ENCODE measurements at regions of chr16 and their contacts with region 1.

Region 1: GRCh38 chr16:2340564-2341455 is at the start of gene ABCA3:
- DNase-seq: peak; percentile 81 to 97 (median 92)
- ATAC-seq: peak; percentile 88
- H3K4me3 ChIP-seq: peak within 1 kb of the TSS; percentile 69
- H3K4me3 Mint-ChIP-seq: peak within 1 kb of the TSS; percentile 90
- H3K27ac ChIP-seq: no peak within 1 kb of the TSS
- H3K27ac Mint-ChIP-seq: peak within 1 kb of the TSS; percentile 55
- H3K4me1 ChIP-seq: peaks cover 20% of the 10 kb centered on the region
- H3K4me1 Mint-ChIP-seq: peaks cover 17% of the 10 kb centered on the region
- H3K27me3 ChIP-seq: peaks cover 0 to 2% of the 10 kb centered on the region in 2 experiments
- H3K27me3 Mint-ChIP-seq: no peaks in the 10 kb centered on the region
- CTCF ChIP-seq: peak; percentile 97
- total RNA-seq, gene ABCA3: 7.0 to 7.7 TPM

Region 2: DNA sequence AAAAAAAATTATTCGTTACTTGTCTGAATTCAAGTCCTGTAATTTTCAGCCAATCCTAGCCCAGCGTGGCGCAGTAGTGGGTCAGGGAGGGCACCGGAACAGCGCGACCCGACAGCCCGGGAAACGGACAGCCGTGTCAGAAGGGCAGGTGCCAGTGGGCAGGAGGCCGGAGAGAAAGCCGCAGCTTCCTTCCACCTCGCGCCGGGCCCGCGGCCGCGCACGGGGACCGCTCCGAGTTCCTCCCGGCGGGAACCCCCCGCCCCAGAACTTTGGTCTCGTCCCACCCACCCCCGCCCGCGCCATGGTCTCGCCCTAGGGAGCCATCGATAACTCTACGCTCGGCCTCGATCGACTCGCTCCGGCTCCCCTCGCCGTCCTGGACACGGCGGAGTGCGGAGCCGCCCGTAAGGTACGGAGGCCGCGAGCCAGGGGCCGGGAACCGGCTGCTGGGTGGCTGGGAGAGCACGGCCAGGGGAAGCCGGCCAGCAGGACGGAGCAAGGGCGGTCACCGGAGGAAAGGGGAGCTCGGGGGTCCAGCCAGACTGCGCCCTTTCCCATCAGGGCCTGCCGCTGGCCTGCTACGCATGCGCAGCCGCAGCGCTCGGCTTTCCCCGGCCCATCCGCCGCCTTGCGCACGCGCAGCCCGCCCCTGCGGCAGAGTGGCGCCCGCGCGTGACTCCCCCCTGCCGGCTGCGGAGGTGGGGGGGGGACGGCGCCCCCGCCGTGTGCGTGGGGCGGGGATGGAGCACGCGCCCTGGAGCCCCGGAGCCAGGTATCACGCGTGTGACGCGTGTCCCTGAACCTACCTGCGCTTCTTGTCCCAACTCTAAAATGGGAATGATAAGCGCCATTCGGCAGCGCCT is 135.5 kb before region 1 on chr16 and contains the start of gene MLST8:
- CTCF ChIA-PET with region 1: no interaction called
- POLR2A ChIA-PET with region 1: no interaction called
- intact Hi-C with region 1: no loop called
- DNase-seq: peak; percentile 82 to 98 (median 92)
- ATAC-seq: peak; percentile 82
- H3K4me3 ChIP-seq: peak within 1 kb of the TSS; percentile 59
- H3K4me3 Mint-ChIP-seq: peak within 1 kb of the TSS; percentile 90
- H3K27ac ChIP-seq: peak within 1 kb of the TSS; percentile 90 to 94
- H3K27ac Mint-ChIP-seq: peak within 1 kb of the TSS; percentile 79
- H3K4me1 ChIP-seq: peaks cover 23% of the 10 kb centered on the region
- H3K4me1 Mint-ChIP-seq: peaks cover 13% of the 10 kb centered on the region
- H3K27me3 ChIP-seq: no peaks in the 10 kb centered on the region
- H3K27me3 Mint-ChIP-seq: no peaks in the 10 kb centered on the region
- CTCF ChIP-seq: peak; percentile 26
- total RNA-seq, gene MLST8: 22.9 to 26.4 TPM

Region 3: GRCh38 chr16:2486645-2487516 is 146.1 kb after region 1 on chr16:
- CTCF ChIA-PET with region 1: interaction called, 7 read pairs
- POLR2A ChIA-PET with region 1: no interaction called
- intact Hi-C with region 1: loop called (anchors 1 kb)
- DNase-seq: peak; percentile 67 to 93 (median 79)
- ATAC-seq: peak; percentile 99
- H3K4me3 ChIP-seq: no peak overlapping the region
- H3K4me3 Mint-ChIP-seq: peak overlapping the region; percentile 13
- H3K27ac ChIP-seq: no peak overlapping the region
- H3K27ac Mint-ChIP-seq: peak overlapping the region; percentile 61
- H3K4me1 ChIP-seq: peaks cover 17% of the 10 kb centered on the region
- H3K4me1 Mint-ChIP-seq: peaks cover 12% of the 10 kb centered on the region
- H3K27me3 ChIP-seq: no peaks in the 10 kb centered on the region
- H3K27me3 Mint-ChIP-seq: no peaks in the 10 kb centered on the region
- CTCF ChIP-seq: peak; percentile 65

Region 4: GRCh38 chr16:2500918-2501750 is 160.3 kb after region 1 on chr16:
- CTCF ChIA-PET with region 1: interaction called, 16 read pairs
- POLR2A ChIA-PET with region 1: no interaction called
- intact Hi-C with region 1: loop called (anchors 1 to 2 kb)
- DNase-seq: peak; percentile 67 to 89 (median 76)
- ATAC-seq: peak; percentile 99
- H3K4me3 ChIP-seq: no peak overlapping the region
- H3K4me3 Mint-ChIP-seq: no peak overlapping the region
- H3K27ac ChIP-seq: no peak overlapping the region
- H3K27ac Mint-ChIP-seq: no peak overlapping the region
- H3K4me1 ChIP-seq: peaks cover 7% of the 10 kb centered on the region
- H3K4me1 Mint-ChIP-seq: peaks cover 4% of the 10 kb centered on the region
- H3K27me3 ChIP-seq: no peaks in the 10 kb centered on the region
- H3K27me3 Mint-ChIP-seq: no peaks in the 10 kb centered on the region
- CTCF ChIP-seq: peak; percentile 97

Region 5: DNA sequence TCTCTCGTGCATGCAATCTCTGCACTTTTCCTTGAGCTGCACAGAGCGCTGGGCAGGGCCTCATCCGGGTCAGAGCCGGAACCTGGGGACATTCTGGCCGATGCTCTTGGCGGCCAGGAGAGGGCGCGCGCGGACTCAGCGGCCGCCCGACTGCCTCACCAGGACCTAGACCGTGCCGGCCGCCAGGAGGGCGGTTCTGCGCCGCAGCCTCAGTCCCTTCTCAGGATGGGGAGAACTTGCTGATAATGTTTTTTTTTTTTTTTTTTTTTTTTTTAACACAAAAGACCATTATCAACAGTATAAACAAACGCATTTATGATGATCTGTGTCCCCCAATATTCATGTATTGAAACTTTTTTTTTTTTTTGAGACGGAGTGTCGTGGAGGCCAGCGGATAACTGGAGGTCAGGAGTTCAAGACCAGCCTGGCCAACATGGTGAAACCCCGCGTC is 534.1 kb after region 1 on chr16:
- CTCF ChIA-PET with region 1: no interaction called
- POLR2A ChIA-PET with region 1: no interaction called
- intact Hi-C with region 1: loop called in 1 of 2 experiments (anchors 5 kb)
- DNase-seq: peak; percentile 40 to 90 (median 56)
- ATAC-seq: peak; percentile 100
- H3K4me3 ChIP-seq: no peak overlapping the region
- H3K4me3 Mint-ChIP-seq: no peak overlapping the region
- H3K27ac ChIP-seq: no peak overlapping the region
- H3K27ac Mint-ChIP-seq: no peak overlapping the region
- H3K4me1 ChIP-seq: peaks cover 9% of the 10 kb centered on the region
- H3K4me1 Mint-ChIP-seq: no peaks in the 10 kb centered on the region
- H3K27me3 ChIP-seq: no peaks in the 10 kb centered on the region
- H3K27me3 Mint-ChIP-seq: no peaks in the 10 kb centered on the region
- CTCF ChIP-seq: peak; percentile 95

Measured in CD4-positive, alpha-beta T cell (primary cell).